Stomach (tissue), 19 donors: ENCODE measurements at regions of chr1 and their contacts with region 1.

Region 1: DNA sequence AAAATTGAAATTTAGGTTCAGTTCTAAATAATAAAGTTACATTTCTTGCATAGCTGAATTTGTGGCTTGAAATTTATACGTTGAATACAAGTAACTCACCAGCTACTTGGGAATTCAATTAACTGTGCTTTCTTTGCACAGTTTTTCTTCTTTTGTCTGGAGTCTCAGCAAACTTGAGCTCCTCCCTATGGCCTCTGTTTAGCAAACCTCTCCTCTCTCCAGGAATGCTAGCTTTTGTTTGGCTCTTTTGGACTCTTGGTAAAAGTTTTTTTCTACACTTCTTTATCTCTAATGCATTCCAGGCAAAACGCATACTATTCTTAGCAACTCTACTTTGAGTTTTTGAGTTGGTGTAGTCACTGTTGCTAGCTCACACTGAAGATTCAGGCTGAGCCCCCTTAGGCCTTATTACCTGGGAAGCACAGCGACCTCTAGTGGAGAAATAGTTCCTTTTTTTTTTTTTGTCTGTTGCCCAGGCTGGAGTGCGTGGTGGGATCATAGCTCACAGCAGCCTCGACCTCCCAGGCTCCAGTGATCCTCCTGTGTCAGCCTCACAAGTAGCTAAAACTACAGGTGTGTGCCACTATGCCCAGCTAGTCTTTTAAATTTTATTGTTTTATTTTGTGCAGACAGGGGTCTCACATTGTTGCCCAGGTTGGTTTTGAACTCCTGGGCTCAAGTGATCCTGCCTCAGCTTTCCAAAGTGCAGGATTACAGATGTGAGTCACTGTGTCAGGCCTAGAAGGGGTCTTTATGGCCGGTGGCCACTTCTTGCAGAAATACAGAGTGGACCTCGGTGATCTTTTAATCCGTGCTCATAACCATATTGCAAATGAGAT is 61.7 kb downstream of the CASQ2 start:
- DNase-seq: peak in 1 of 2 donors; percentile 75
- H3K4me3 ChIP-seq: no peak overlapping the region
- H3K27ac ChIP-seq: no peak overlapping the region
- H3K4me1 ChIP-seq: peaks cover 0 to 12% (median 11%) of the 10 kb centered on the region in 4 donors
- H3K27me3 ChIP-seq: no peaks in the 10 kb centered on the region
- CTCF ChIP-seq: peak in 4 of 7 experiments; percentile 48 to 74 (median 62)
- EP300 ChIP-seq: no peak
- POLR2A ChIP-seq: no peak

Region 2: DNA sequence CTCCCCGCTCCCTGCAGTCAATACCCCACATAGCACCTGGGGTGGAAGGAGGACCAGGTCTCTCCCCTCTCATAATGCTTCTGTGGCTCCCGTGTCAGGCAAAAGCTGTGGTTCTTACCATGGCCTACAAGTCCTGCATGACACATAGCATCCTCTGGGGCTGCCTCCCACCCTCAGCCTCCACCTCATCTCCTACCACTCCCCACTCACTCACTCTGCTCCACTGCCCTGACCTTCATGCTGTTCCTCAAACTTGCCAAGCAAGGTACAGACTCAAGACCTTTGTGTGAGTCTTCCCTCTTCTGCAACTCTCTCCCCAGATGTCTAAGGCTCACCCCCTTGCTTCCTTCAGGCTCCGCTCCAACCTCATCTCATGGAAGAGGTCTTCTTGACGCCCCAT is 93.0 kb before region 1 on chr1:
- intact Hi-C with region 1: loop called (anchors 10 kb)
- DNase-seq: no peak
- H3K4me3 ChIP-seq: no peak overlapping the region
- H3K27ac ChIP-seq: no peak overlapping the region
- H3K4me1 ChIP-seq: no peaks in the 10 kb centered on the region
- H3K27me3 ChIP-seq: no peaks in the 10 kb centered on the region
- CTCF ChIP-seq: no peak
- EP300 ChIP-seq: no peak
- POLR2A ChIP-seq: no peak

Region 3: DNA sequence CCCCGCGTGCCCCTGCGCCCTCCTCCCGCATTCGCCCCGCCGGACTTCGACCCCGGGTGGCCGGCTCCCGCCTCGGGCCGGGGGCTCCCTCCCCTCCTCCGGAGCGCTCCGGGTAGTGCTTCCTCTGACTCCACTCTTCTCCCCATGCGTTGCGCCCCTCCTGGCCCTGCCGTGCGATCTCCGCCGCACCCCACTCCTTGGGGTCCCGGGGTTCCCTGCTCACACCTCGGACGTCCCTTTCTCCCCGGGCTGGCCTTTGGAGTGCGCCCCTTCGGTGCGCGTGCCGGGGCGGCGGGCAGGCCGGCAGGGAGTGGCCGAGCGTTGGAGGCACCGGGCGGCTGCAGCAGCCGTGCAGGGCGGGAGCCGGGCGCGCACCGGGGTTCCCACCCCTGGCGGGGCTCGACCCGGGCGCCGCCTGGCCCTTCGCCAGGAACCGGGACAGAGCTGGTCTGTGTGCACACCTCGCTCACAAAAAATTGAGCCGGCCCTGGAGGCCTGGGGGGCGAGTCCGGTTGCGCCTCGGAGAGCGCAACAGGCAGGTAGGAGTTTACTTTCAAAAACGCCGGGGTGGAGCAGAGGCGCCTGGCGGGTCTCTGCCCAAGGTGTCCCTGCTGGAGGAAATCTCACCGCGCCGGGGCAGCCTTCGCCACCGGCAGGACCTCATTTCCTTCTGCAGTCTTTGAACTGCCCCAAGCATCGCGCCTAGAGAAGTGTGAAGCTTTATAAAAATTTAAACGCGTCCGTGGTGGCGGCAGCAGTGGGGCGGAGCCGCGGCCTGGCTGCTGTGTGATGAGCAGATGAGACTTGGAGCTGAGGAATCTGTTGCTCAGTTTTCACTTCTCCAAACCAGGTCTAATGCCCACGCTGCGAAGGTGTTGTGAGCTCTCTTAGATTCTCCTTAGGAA is 64.4 kb before region 1 on chr1:
- intact Hi-C with region 1: no loop called
- DNase-seq: peak; percentile 64 to 86
- H3K4me3 ChIP-seq: peak overlapping the region; percentile 83 to 98 (median 88)
- H3K27ac ChIP-seq: peak overlapping the region; percentile 76 to 89 (median 84)
- H3K4me1 ChIP-seq: peaks cover 14 to 42% (median 20%) of the 10 kb centered on the region in 4 donors
- H3K27me3 ChIP-seq: no peaks in the 10 kb centered on the region
- CTCF ChIP-seq: peak in 1 of 7 experiments; percentile 7
- EP300 ChIP-seq: no peak
- POLR2A ChIP-seq: no peak